ENCODE measurements at regions of chr7 and their contacts with region 1.

Region 1: GRCh38 chr7:100396421-100396982 is 23.2 kb downstream of the PILRA start:
- DNase-seq: peak; percentile 85
- H3K4me3 Mint-ChIP-seq: no peak overlapping the region
- H3K27ac Mint-ChIP-seq: no peak overlapping the region
- H3K4me1 Mint-ChIP-seq: peaks cover 28% of the 10 kb centered on the region
- H3K27me3 Mint-ChIP-seq: peaks cover 19% of the 10 kb centered on the region

Region 2: GRCh38 chr7:100369105-100369504 is 27.4 kb before region 1 on chr7:
- CTCF ChIA-PET with region 1: interaction called, 3 read pairs
- intact Hi-C with region 1: loop called (anchors 1 kb)
- DNase-seq: no peak
- H3K4me3 Mint-ChIP-seq: no peak overlapping the region
- H3K27ac Mint-ChIP-seq: no peak overlapping the region
- H3K4me1 Mint-ChIP-seq: peaks cover 37% of the 10 kb centered on the region
- H3K27me3 Mint-ChIP-seq: no peaks in the 10 kb centered on the region

Region 3: GRCh38 chr7:100446040-100446439 is 49.5 kb after region 1 on chr7:
- CTCF ChIA-PET with region 1: no interaction called
- intact Hi-C with region 1: loop called (anchors 1 kb)
- DNase-seq: no peak
- H3K4me3 Mint-ChIP-seq: no peak overlapping the region
- H3K27ac Mint-ChIP-seq: no peak overlapping the region
- H3K4me1 Mint-ChIP-seq: peaks cover 20% of the 10 kb centered on the region
- H3K27me3 Mint-ChIP-seq: no peaks in the 10 kb centered on the region